ENCODE measurements at regions of chr1 and their contacts with region 1.

Region 1: DNA sequence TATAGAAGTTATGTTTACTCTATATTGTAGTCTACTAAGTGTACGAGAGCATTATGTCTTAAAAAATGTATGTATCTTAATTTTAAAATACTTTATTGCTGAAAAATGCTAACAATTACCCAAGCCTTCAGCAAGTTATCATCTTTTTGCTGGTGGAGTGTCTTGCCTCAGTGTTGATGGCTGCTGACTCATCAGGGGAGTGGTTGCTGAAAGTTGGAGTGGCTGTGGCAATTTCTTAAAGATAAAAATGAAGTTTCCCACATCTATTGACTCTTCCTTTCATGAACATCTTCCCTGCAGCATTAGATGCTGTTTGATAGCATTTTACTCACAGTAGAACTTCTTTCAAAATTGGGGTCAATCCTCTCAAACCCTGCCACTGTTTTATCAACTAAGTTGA is 95.8 kb downstream of the CDC7 start:
- DNase-seq: peak; percentile 69
- H3K4me3 Mint-ChIP-seq: no peak overlapping the region
- H3K27ac Mint-ChIP-seq: no peak overlapping the region
- H3K4me1 Mint-ChIP-seq: peaks cover 28% of the 10 kb centered on the region
- H3K27me3 Mint-ChIP-seq: no peaks in the 10 kb centered on the region

Region 2: DNA sequence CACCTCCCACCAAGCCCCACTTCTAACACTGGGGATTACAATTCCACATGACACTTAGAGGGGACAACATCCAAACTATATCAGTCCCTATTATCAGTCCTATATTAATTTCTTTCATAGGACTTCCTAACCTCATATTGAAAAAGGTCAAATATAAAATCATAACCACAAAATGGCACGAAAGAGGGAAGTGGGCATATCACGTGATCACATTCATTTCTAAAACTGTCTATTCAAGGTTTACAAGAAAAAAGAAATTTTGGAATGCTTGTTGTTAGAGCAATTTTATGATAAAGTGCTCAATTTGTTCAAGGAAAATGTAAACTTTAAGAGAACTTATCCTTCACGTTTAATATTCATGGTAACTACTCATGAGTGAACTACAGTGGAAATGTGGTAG is 109.0 kb before region 1 on chr1:
- intact Hi-C with region 1: no loop called
- DNase-seq: no peak
- H3K4me3 Mint-ChIP-seq: no peak overlapping the region
- H3K27ac Mint-ChIP-seq: no peak overlapping the region
- H3K4me1 Mint-ChIP-seq: peaks cover 5% of the 10 kb centered on the region
- H3K27me3 Mint-ChIP-seq: peaks cover 12% of the 10 kb centered on the region

Region 3: DNA sequence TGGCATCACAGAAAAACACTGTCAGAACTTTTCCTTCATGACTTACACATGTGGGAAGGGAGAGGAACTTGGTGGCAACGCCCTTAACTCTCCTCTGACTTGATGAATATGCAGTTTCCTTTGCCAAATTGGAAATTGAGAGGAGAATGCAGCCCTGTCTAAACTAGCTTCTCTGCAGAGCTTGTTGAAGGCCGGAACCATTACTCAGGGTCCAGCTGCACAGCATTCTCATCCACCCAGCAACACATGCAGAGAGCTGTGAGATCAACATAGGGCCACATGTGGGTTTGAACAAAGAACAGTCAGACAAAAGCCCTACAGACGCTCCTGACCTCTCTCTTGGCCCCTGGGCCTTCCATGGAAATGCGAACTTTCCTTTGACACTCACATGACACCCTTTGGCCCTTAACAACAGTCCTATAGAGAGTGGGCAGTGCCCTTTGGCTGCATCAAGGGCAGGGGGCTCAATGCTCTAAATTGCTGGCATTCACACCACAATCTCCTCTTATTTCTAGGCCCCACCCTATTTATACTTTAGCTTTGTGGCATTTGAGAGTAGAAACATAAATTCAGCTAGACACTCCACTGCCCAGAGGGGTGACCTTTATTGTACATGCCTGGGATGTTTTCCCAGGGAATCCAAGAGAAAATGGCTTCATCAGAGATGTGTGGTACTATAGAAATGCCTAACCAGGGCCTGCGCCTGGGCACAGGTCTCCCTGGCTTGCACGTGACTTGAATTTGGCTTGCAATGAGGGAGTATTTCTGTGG is 31.4 kb before region 1 on chr1:
- intact Hi-C with region 1: loop called (anchors 2 kb)
- DNase-seq: no peak
- H3K4me3 Mint-ChIP-seq: no peak overlapping the region
- H3K27ac Mint-ChIP-seq: no peak overlapping the region
- H3K4me1 Mint-ChIP-seq: peaks cover 27% of the 10 kb centered on the region
- H3K27me3 Mint-ChIP-seq: no peaks in the 10 kb centered on the region